Transverse colon (tissue), 4 donors: ENCODE measurements at regions of chr2 and their contacts with region 1.

Region 1: GRCh38 chr2:157751462-157752058 is 122.9 kb upstream of the ACVR1C start:
- DNase-seq: no peak
- H3K4me3 ChIP-seq: no peak overlapping the region
- H3K27ac ChIP-seq: no peak overlapping the region
- H3K4me1 ChIP-seq: no peaks in the 10 kb centered on the region
- H3K27me3 ChIP-seq: no peaks in the 10 kb centered on the region
- CTCF ChIP-seq: no peak
- EP300 ChIP-seq: no peak
- POLR2A ChIP-seq: no peak

Region 2: DNA sequence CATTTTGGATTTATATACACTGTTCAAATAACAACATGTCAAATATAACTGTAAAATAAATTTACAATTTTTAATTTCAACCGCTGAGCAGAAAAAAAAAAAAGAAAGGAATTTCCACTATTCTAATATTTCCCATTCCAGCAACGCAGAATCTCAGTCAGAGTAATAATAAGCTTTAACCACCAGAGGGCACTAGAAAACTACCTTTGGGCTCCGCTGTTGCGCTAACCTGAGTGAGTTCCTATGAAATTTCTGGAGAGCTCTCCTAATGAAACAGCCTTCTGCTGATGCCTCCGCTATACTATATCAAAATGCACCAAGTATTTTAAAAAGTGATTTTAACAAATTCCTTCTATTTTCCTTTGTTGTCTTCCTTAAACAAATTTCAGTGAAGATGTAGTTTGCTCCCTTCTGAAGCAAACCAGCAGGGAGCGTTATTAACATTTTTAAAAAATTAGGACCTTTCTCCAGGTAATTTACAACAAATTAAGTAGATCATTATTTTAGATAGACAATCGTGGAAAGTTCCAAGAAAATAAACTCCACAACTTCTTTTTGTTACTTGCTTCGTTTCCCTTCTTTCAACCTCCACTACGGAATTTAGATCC is 449.0 kb before region 1 on chr2:
- in situ Hi-C with region 1: loop called in 2 of 4 experiments (anchors 25 kb)
- intact Hi-C with region 1: no loop called
- DNase-seq: no peak
- H3K4me3 ChIP-seq: no peak overlapping the region
- H3K27ac ChIP-seq: no peak overlapping the region
- H3K4me1 ChIP-seq: peaks cover 0 to 5% (median 0%) of the 10 kb centered on the region in 4 donors
- H3K27me3 ChIP-seq: peaks cover 16% of the 10 kb centered on the region
- CTCF ChIP-seq: peak; percentile 67 to 79 (median 74)
- EP300 ChIP-seq: no peak
- POLR2A ChIP-seq: no peak

Region 3: GRCh38 chr2:157509744-157510143 is 241.8 kb before region 1 on chr2:
- in situ Hi-C with region 1: loop called in 3 of 4 experiments (anchors 25 kb)
- intact Hi-C with region 1: no loop called
- DNase-seq: no peak
- H3K4me3 ChIP-seq: no peak overlapping the region
- H3K27ac ChIP-seq: no peak overlapping the region
- H3K4me1 ChIP-seq: peaks cover 0 to 10% (median 2%) of the 10 kb centered on the region in 4 donors
- H3K27me3 ChIP-seq: no peaks in the 10 kb centered on the region
- CTCF ChIP-seq: peak in 1 of 5 experiments; percentile 6
- EP300 ChIP-seq: no peak
- POLR2A ChIP-seq: no peak